B cell (primary cell): ENCODE measurements at regions of chr1 and their contacts with region 1.

Region 1: DNA sequence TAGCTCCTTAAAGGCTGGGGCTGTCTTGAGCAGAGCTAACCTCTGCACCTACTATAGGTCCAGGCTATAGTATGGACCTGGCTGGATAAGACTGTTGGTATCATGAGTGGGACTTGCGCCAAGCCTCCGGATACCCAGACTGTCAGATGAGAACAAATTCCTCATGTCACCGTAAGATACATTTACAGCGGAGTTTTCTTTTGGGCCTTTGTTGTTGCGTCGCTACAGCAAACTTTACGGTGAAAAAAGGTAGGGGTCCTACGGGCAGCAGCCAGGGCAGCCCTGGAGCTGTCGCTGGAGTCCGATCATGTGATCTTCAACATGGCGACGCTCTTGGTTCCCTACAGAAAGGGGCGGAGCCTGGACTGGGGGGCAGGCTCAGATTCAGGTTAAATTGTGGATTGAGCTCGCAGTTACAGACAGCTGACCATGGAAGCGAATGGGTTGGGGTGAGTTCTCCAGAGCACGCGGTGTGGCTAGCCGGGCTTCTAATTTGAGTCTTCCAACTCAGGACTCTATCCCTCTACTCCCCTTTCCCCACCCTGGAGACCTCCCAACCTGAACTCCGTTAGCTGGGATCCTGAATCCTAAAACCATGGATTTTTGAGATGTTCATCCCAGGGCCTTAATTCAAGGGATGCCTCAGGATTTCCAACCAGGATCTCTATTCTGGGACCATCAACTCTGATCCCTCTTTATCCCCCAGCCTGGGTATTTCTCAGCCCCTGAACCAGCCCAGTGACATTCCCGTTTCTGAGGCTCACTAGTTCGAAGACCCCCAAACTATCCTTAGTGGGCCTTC is at the start of gene UROD:
- DNase-seq: peak; percentile 94
- ATAC-seq: peak; percentile 83
- H3K4me3 ChIP-seq: peak within 1 kb of the TSS; percentile 59 to 89 (median 78)
- H3K4me3 Mint-ChIP-seq: peak within 1 kb of the TSS; percentile 91
- H3K27ac ChIP-seq: peak within 1 kb of the TSS; percentile 66 to 79
- H3K27ac Mint-ChIP-seq: peak within 1 kb of the TSS; percentile 89
- H3K4me1 ChIP-seq: peaks cover 31 to 42% of the 10 kb centered on the region in 2 donors
- H3K4me1 Mint-ChIP-seq: peaks cover 43% of the 10 kb centered on the region
- H3K27me3 ChIP-seq: no peaks in the 10 kb centered on the region
- H3K27me3 Mint-ChIP-seq: no peaks in the 10 kb centered on the region
- CTCF ChIP-seq: no peak
- total RNA-seq, gene UROD: 57.3 and 65.5 TPM in 2 replicates

Region 2: GRCh38 chr1:44631647-44632539 is 380.1 kb before region 1 on chr1:
- CTCF ChIA-PET with region 1: interaction called, 3 read pairs
- POLR2A ChIA-PET with region 1: interaction called, 5 read pairs
- intact Hi-C with region 1: loop called (anchors 5 kb)
- DNase-seq: peak; percentile 93
- ATAC-seq: peak; percentile 76
- H3K4me3 ChIP-seq: peak overlapping the region; percentile 53 to 76 (median 69)
- H3K4me3 Mint-ChIP-seq: peak overlapping the region; percentile 96
- H3K27ac ChIP-seq: peak overlapping the region; percentile 89 to 91
- H3K27ac Mint-ChIP-seq: peak overlapping the region; percentile 99
- H3K4me1 ChIP-seq: peaks cover 18 to 23% of the 10 kb centered on the region in 2 donors
- H3K4me1 Mint-ChIP-seq: peaks cover 44% of the 10 kb centered on the region
- H3K27me3 ChIP-seq: no peaks in the 10 kb centered on the region
- H3K27me3 Mint-ChIP-seq: no peaks in the 10 kb centered on the region
- CTCF ChIP-seq: no peak

Region 3: GRCh38 chr1:44775078-44775929 is 236.7 kb before region 1 on chr1 and contains the start of gene RPS8:
- CTCF ChIA-PET with region 1: interaction called, 12 read pairs
- POLR2A ChIA-PET with region 1: interaction called, 14 read pairs
- intact Hi-C with region 1: loop called (anchors 5 kb)
- DNase-seq: peak; percentile 95
- ATAC-seq: peak; percentile 83
- H3K4me3 ChIP-seq: peak within 1 kb of the TSS; percentile 85 to 99 (median 89)
- H3K4me3 Mint-ChIP-seq: peak within 1 kb of the TSS; percentile 95
- H3K27ac ChIP-seq: peak within 1 kb of the TSS; percentile 89 to 93
- H3K27ac Mint-ChIP-seq: peak within 1 kb of the TSS; percentile 94
- H3K4me1 ChIP-seq: peaks cover 14 to 28% of the 10 kb centered on the region in 2 donors
- H3K4me1 Mint-ChIP-seq: peaks cover 34% of the 10 kb centered on the region
- H3K27me3 ChIP-seq: no peaks in the 10 kb centered on the region
- H3K27me3 Mint-ChIP-seq: no peaks in the 10 kb centered on the region
- CTCF ChIP-seq: no peak
- total RNA-seq, gene RPS8: 2,492 and 2,525 TPM in 2 replicates

Region 4: GRCh38 chr1:44799770-44800584 is 212.1 kb before region 1 on chr1 and contains the start of gene PLK3:
- CTCF ChIA-PET with region 1: interaction called, 14 read pairs
- POLR2A ChIA-PET with region 1: interaction called, 8 read pairs
- intact Hi-C with region 1: loop called (anchors 2 kb)
- DNase-seq: peak; percentile 99
- ATAC-seq: peak; percentile 89
- H3K4me3 ChIP-seq: peak within 1 kb of the TSS; percentile 61 to 88 (median 85)
- H3K4me3 Mint-ChIP-seq: peak within 1 kb of the TSS; percentile 99
- H3K27ac ChIP-seq: peak within 1 kb of the TSS; percentile 84 to 93
- H3K27ac Mint-ChIP-seq: peak within 1 kb of the TSS; percentile 100
- H3K4me1 ChIP-seq: peaks cover 16 to 38% of the 10 kb centered on the region in 2 donors
- H3K4me1 Mint-ChIP-seq: peaks cover 33% of the 10 kb centered on the region
- H3K27me3 ChIP-seq: no peaks in the 10 kb centered on the region
- H3K27me3 Mint-ChIP-seq: no peaks in the 10 kb centered on the region
- CTCF ChIP-seq: peak; percentile 85
- total RNA-seq, gene PLK3: 30.1 and 35.9 TPM in 2 replicates

Region 5: GRCh38 chr1:45051005-45051772 is 39.2 kb after region 1 on chr1:
- CTCF ChIA-PET with region 1: interaction called, 4 read pairs
- POLR2A ChIA-PET with region 1: interaction called, 6 read pairs
- intact Hi-C with region 1: loop called (anchors 5 kb)
- DNase-seq: peak; percentile 15
- ATAC-seq: no peak
- H3K4me3 ChIP-seq: peak overlapping the region in 3 of 5 experiments; percentile 11 to 41 (median 24)
- H3K4me3 Mint-ChIP-seq: peak overlapping the region; percentile 46
- H3K27ac ChIP-seq: peak overlapping the region; percentile 18 to 80
- H3K27ac Mint-ChIP-seq: peak overlapping the region; percentile 33
- H3K4me1 ChIP-seq: peaks cover 29 to 33% of the 10 kb centered on the region in 2 donors
- H3K4me1 Mint-ChIP-seq: peaks cover 26% of the 10 kb centered on the region
- H3K27me3 ChIP-seq: no peaks in the 10 kb centered on the region
- H3K27me3 Mint-ChIP-seq: no peaks in the 10 kb centered on the region
- CTCF ChIP-seq: no peak

Region 6: GRCh38 chr1:45359882-45360513 is 348.0 kb after region 1 on chr1:
- CTCF ChIA-PET with region 1: interaction called, 13 read pairs
- POLR2A ChIA-PET with region 1: no interaction called
- intact Hi-C with region 1: no loop called
- DNase-seq: peak; percentile 77
- ATAC-seq: peak; percentile 67
- H3K4me3 ChIP-seq: no peak overlapping the region
- H3K4me3 Mint-ChIP-seq: peak overlapping the region; percentile 28
- H3K27ac ChIP-seq: peak overlapping the region in 1 of 2 donors; percentile 68
- H3K27ac Mint-ChIP-seq: peak overlapping the region; percentile 37
- H3K4me1 ChIP-seq: peaks cover 7 to 12% of the 10 kb centered on the region in 2 donors
- H3K4me1 Mint-ChIP-seq: peaks cover 24% of the 10 kb centered on the region
- H3K27me3 ChIP-seq: no peaks in the 10 kb centered on the region
- H3K27me3 Mint-ChIP-seq: no peaks in the 10 kb centered on the region
- CTCF ChIP-seq: peak; percentile 83